ENCODE measurements at regions of chr14 and their contacts with region 1.

Region 1: GRCh38 chr14:93946104-93946503 is 19.0 kb downstream of the FAM181A start:
- DNase-seq: no peak
- ATAC-seq: no peak
- H3K4me3 ChIP-seq: no peak overlapping the region
- H3K4me3 Mint-ChIP-seq: no peak overlapping the region
- H3K27ac ChIP-seq: no peak overlapping the region
- H3K27ac Mint-ChIP-seq: no peak overlapping the region
- H3K4me1 ChIP-seq: no peaks in the 10 kb centered on the region
- H3K4me1 Mint-ChIP-seq: peaks cover 0 to 4% of the 10 kb centered on the region in 2 donors
- H3K27me3 ChIP-seq: no peaks in the 10 kb centered on the region
- H3K27me3 Mint-ChIP-seq: no peaks in the 10 kb centered on the region
- CTCF ChIP-seq: no peak

Region 2: DNA sequence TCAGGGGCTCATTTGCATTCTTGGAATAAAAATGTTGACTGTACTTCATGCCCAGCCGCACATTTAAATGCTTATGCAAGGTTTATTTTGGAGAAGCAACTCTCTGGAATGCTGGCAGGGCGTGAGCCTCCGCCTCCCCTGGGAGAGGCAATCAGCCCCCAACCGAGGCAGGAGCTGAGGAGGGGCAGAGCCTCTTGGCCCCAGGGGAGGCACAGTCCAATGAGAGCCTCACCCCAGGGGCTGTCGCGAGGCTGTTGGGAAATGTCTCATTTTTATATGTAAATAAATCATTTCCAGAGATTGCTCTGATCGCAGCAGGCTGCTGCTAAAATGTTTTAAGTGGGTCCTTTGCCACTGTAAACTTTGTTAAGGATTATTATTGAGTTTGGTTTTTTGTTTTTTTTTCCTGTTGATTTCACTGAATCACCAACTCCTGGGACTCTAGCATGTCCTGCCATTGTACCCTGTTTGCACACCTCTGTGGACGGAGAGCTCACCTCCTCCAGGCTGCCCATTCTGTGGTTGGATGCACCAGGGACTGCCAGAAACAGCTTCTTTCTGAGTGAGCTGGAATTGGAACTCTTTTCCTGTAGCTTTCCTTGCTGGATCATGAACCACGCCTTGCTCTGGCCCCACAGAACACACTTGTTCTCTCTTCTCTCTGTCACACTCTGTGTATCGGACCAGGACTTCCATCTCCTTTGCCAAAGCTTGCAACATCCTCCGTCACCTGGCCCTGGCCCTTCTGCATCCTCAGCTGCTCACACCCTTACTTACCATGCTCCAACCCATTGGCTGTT is 65.9 kb before region 1 on chr14:
- intact Hi-C with region 1: no loop called
- DNase-seq: no peak
- ATAC-seq: no peak
- H3K4me3 ChIP-seq: no peak overlapping the region
- H3K4me3 Mint-ChIP-seq: no peak overlapping the region
- H3K27ac ChIP-seq: no peak overlapping the region
- H3K27ac Mint-ChIP-seq: no peak overlapping the region
- H3K4me1 ChIP-seq: peaks cover 5% of the 10 kb centered on the region
- H3K4me1 Mint-ChIP-seq: peaks cover 8% of the 10 kb centered on the region in 2 donors
- H3K27me3 ChIP-seq: peaks cover 4% of the 10 kb centered on the region
- H3K27me3 Mint-ChIP-seq: peaks cover 13 to 27% of the 10 kb centered on the region in 2 donors
- CTCF ChIP-seq: no peak

Region 3: GRCh38 chr14:93984987-93985410 is 38.9 kb after region 1 on chr14:
- intact Hi-C with region 1: loop called (anchors 5 kb)
- DNase-seq: no peak
- ATAC-seq: no peak
- H3K4me3 ChIP-seq: no peak overlapping the region
- H3K4me3 Mint-ChIP-seq: no peak overlapping the region
- H3K27ac ChIP-seq: no peak overlapping the region
- H3K27ac Mint-ChIP-seq: no peak overlapping the region
- H3K4me1 ChIP-seq: no peaks in the 10 kb centered on the region
- H3K4me1 Mint-ChIP-seq: no peaks in the 10 kb centered on the region
- H3K27me3 ChIP-seq: no peaks in the 10 kb centered on the region
- H3K27me3 Mint-ChIP-seq: peaks cover 0 to 6% of the 10 kb centered on the region in 2 donors
- CTCF ChIP-seq: no peak